ENCODE measurements at regions of chr16 and their contacts with region 1.

Region 1: DNA sequence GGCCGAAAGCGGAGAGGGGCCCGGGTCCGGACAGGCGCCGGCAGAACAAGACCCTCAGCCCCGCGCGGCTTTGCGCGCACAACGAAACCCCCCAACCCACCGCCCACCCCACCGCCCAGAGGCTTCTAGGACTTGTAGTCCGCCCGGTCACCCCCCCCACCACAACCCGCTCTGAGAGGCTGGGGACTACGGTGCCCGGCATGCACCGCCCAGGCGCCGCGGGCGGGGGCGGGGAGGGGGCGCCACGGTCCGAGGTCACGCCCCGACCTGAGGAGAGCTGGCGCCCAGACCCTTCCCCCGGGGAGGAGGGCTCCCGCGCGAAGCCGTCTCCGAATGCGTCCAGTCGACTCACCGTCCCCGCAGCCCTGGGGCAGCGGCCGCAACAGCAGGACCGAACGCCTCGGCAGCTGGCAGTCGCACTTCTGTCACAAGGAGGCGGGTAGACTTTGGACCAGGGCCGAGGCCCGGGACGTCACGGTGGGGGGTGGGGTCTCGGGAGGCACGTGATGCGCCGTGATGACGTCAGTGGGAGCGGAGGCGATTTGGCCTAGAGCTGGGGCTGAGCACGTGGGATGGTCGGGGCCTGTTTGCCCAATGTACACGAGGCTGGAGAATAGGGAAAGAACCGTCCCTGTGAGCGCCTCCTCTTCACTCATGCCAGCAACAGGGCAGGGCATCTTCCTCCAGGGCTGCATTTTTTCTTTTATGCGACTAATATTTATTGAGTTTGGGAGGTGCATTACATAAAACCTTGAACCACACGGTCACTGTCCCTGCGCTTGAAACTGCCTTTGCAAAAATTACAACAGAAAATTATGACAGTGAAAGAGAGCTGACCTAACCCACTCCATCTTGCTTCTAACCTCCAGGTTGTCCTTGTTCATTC is at the start of gene CDIP1:
- DNase-seq: peak; percentile 98 to 99
- ATAC-seq: peak; percentile 96
- H3K4me3 ChIP-seq: peak within 1 kb of the TSS; percentile 67 to 73
- H3K27ac ChIP-seq: peak within 1 kb of the TSS in 1 of 2 donors; percentile 39
- H3K4me1 ChIP-seq: no peaks in the 10 kb centered on the region
- H3K27me3 ChIP-seq: no peaks in the 10 kb centered on the region
- total RNA-seq, gene CDIP1: 23.6 to 34.7 TPM

Region 2: GRCh38 chr16:4475880-4476788 is 62.5 kb before region 1 on chr16 and contains the start of gene HMOX2:
- intact Hi-C with region 1: loop called in 1 of 2 experiments (anchors 5 kb)
- DNase-seq: peak; percentile 94 to 96
- ATAC-seq: peak; percentile 96
- H3K4me3 ChIP-seq: peak within 1 kb of the TSS; percentile 56 to 69
- H3K27ac ChIP-seq: no peak within 1 kb of the TSS
- H3K4me1 ChIP-seq: no peaks in the 10 kb centered on the region
- H3K27me3 ChIP-seq: no peaks in the 10 kb centered on the region
- total RNA-seq, gene HMOX2: 25.1 to 28.6 TPM

Region 3: DNA sequence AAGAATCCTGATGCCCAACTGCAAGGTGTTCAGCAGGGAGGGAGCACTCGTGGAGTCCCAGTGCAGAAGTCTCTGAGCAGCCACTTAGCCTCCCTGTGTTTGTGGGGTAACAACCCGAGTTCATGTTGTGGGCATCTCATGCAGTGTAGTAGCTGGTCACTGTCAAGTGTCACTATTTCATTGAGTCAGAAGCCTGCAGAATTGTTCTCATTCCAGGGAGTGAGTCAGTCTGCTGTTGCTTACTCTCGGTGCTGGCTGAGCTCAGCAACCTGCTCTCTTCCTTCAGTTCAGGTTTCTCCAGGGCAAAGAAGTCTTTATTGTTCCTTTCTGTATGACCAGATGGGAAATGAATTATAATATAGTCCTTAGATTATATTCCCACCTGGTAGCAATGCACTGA is 38.3 kb before region 1 on chr16:
- intact Hi-C with region 1: no loop called
- DNase-seq: peak; percentile 39 to 54
- ATAC-seq: peak; percentile 78
- H3K4me3 ChIP-seq: peak overlapping the region in 1 of 2 donors; percentile 44
- H3K27ac ChIP-seq: peak overlapping the region; percentile 68 to 88
- H3K4me1 ChIP-seq: peaks cover 0 to under 1% of the 10 kb centered on the region in 2 donors
- H3K27me3 ChIP-seq: no peaks in the 10 kb centered on the region

Region 4: GRCh38 chr16:4580245-4580644 is 41.7 kb after region 1 on chr16:
- intact Hi-C with region 1: no loop called
- DNase-seq: no peak
- ATAC-seq: no peak
- H3K4me3 ChIP-seq: no peak overlapping the region
- H3K27ac ChIP-seq: no peak overlapping the region
- H3K4me1 ChIP-seq: no peaks in the 10 kb centered on the region
- H3K27me3 ChIP-seq: no peaks in the 10 kb centered on the region